ENCODE measurements at regions of chr20 and their contacts with region 1.

Region 1: GRCh38 chr20:49812463-49813304 is at the start of gene SLC9A8:
- DNase-seq: peak; percentile 83 to 90
- ATAC-seq: peak; percentile 93 to 94
- H3K4me3 ChIP-seq: peak within 1 kb of the TSS; percentile 86
- H3K27ac ChIP-seq: peak within 1 kb of the TSS; percentile 96 to 99
- H3K4me1 ChIP-seq: peaks cover 19% of the 10 kb centered on the region
- CTCF ChIP-seq: no peak
- EP300 ChIP-seq: no peak
- POLR2A ChIP-seq: peak; percentile 61
- RAD21 ChIP-seq: peak in 1 of 2 experiments; percentile 11; a peak in 2 of 5 replicates
- polyA plus RNA-seq, gene SLC9A8: 5.0 and 7.4 TPM in 2 replicates

Region 2: DNA sequence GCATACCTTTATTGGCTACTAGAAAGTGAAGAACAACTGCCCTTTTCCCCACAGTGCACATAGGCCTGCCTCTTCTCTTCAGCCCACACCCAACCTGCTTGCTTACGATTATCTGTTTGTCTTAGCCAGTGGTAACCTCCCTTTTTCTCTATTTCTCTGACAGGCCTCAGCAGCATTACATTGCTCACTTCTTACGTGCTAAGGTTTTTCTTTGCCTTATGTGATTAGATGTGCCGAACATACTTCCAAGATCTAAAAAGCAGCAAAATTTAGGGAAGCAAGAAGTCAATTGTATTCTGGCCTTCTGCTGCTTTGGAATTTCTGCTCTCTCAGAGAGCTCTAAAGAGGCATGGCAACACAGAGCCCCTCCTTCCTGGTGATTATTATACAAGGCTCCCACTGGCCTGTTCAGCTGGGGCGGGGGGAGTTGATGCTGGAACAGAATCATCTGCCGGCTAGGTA is 106.0 kb before region 1 on chr20:
- CTCF ChIA-PET with region 1: interaction called, 3 read pairs
- POLR2A ChIA-PET with region 1: interaction called, 11 read pairs
- DNase-seq: peak; percentile 42 to 58
- ATAC-seq: peak; percentile 70 to 78
- H3K4me3 ChIP-seq: peak overlapping the region; percentile 4; the same call in 2 of the 3 replicates
- H3K27ac ChIP-seq: peak overlapping the region; percentile 69 to 98
- H3K4me1 ChIP-seq: peaks cover 95% of the 10 kb centered on the region
- CTCF ChIP-seq: no peak
- EP300 ChIP-seq: no peak
- POLR2A ChIP-seq: no peak
- RAD21 ChIP-seq: 0 out of 5 replicates have a peak, but pooled peaks of 1 of the 2 experiments have one; percentile 4

Region 3: DNA sequence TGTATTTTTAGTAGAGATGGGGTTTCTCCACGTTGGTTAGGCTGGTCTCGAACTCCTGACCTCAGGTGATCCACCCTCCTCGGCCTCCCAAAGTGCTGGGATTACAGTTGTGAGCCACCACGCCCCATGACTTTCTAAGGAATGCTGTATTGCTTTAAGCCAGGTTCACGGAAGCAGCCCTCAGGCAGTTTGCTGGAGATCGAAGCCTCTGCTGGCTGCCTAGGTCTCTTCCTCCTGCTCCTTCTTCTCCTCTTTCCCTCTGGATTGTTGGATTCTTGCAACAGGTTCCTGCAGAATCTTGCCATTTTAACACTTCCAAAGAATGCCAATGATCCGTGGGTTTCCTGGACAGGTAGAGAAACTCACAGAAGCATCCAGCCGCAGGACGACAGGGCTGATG is 69.7 kb before region 1 on chr20:
- CTCF ChIA-PET with region 1: no interaction called
- POLR2A ChIA-PET with region 1: no interaction called
- DNase-seq: no peak
- ATAC-seq: no peak
- H3K4me3 ChIP-seq: no peak overlapping the region
- H3K27ac ChIP-seq: no peak overlapping the region; a peak in 2 of 6 replicates
- H3K4me1 ChIP-seq: peaks cover 9% of the 10 kb centered on the region
- CTCF ChIP-seq: no peak
- EP300 ChIP-seq: no peak
- POLR2A ChIP-seq: no peak
- RAD21 ChIP-seq: no peak

Region 4: GRCh38 chr20:49775229-49775693 is 37.4 kb before region 1 on chr20:
- CTCF ChIA-PET with region 1: interaction called, 8 read pairs
- POLR2A ChIA-PET with region 1: interaction called, 14 read pairs
- DNase-seq: peak; percentile 78 to 90
- ATAC-seq: peak; percentile 63 to 70
- H3K4me3 ChIP-seq: no peak overlapping the region
- H3K27ac ChIP-seq: peak overlapping the region; percentile 94
- H3K4me1 ChIP-seq: peaks cover 68% of the 10 kb centered on the region
- CTCF ChIP-seq: no peak
- EP300 ChIP-seq: peak; percentile 72 to 85; a peak in 3 of 5 replicates
- POLR2A ChIP-seq: no peak
- RAD21 ChIP-seq: no peak; a peak in 2 of 5 replicates

Region 5: DNA sequence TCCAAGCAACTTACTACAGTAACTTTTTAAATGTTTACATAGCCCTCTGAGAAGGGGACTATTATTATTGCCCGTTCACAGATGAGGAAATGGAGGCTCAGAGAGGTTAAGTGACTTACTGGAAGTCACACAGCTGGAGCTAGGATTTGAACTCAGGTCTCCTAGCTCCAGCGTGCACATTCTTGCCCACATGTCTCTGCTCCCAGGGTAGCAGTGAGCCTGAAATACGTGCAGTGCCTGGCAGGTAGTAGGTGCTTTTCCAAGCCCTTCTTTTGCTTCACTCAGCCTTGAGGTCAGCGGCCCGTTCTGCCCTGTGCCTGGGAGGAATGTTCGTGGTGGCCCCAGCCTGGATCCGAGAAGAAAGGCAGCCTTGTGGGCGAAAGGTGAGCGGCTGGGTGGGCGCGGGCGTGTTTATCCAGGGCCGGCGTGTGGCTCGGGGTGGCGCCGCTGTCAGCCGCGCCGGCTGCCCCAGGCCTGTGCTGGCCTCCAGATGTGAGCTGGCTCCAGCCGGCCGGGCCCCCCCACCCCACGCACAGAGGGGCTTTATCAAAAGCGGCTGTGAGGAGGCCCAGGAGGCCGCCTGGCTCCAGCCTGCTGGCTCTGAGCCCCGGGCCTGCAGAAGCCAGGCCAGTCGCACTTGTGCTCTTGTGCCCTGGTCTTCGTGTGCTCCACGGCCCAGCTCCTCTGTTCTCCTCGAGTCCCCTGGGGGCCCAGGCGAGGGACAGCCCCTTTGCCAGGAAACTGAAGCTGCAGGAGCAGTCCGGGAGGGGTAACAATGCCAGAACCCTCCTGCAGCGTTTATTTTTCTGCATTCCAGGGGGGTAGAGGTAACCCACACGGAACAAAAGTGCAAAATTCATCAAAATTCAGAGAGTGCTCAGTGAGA is 242.2 kb after region 1 on chr20:
- CTCF ChIA-PET with region 1: no interaction called
- POLR2A ChIA-PET with region 1: no interaction called
- DNase-seq: no peak
- ATAC-seq: peak in 1 of 2 experiments; percentile 19; a peak in 1 of 6 replicates
- H3K4me3 ChIP-seq: no peak overlapping the region
- H3K27ac ChIP-seq: peak overlapping the region in 1 of 2 experiments; percentile 31; a peak in 1 of 6 replicates
- H3K4me1 ChIP-seq: no peaks in the 10 kb centered on the region
- CTCF ChIP-seq: no peak
- EP300 ChIP-seq: no peak
- POLR2A ChIP-seq: no peak
- RAD21 ChIP-seq: no peak

Measured in A549 (cell line).